ENCODE measurements at regions of chr20 and their contacts with region 1.

Region 1: GRCh38 chr20:43537921-43538877 is 20.6 kb upstream of the SGK2 start:
- DNase-seq: peak in 5 of 9 donors; percentile 19 to 45 (median 31)
- ATAC-seq: peak; percentile 57
- H3K4me3 ChIP-seq: no peak overlapping the region
- H3K4me3 Mint-ChIP-seq: no peak overlapping the region
- H3K27ac ChIP-seq: no peak overlapping the region
- H3K27ac Mint-ChIP-seq: peak overlapping the region in 2 of 9 donors; percentile 45 to 57
- H3K4me1 ChIP-seq: no peaks in the 10 kb centered on the region
- H3K4me1 Mint-ChIP-seq: peaks cover 0 to 4% (median 0%) of the 10 kb centered on the region in 7 donors
- H3K27me3 ChIP-seq: no peaks in the 10 kb centered on the region
- H3K27me3 Mint-ChIP-seq: no peaks in the 10 kb centered on the region

Region 2: GRCh38 chr20:43691928-43692524 is 153.8 kb after region 1 on chr20:
- CTCF ChIA-PET with region 1: interaction called, 13 read pairs
- POLR2A ChIA-PET with region 1: no interaction called
- intact Hi-C with region 1: loop called (anchors 1 kb)
- DNase-seq: peak in 8 of 9 donors; percentile 12 to 62 (median 26)
- ATAC-seq: peak; percentile 73
- H3K4me3 ChIP-seq: no peak overlapping the region
- H3K4me3 Mint-ChIP-seq: no peak overlapping the region
- H3K27ac ChIP-seq: no peak overlapping the region
- H3K27ac Mint-ChIP-seq: peak overlapping the region in 1 of 9 donors; percentile 36
- H3K4me1 ChIP-seq: no peaks in the 10 kb centered on the region
- H3K4me1 Mint-ChIP-seq: peaks cover 0 to 5% (median 5%) of the 10 kb centered on the region in 7 donors
- H3K27me3 ChIP-seq: no peaks in the 10 kb centered on the region
- H3K27me3 Mint-ChIP-seq: no peaks in the 10 kb centered on the region

Region 3: GRCh38 chr20:43840382-43841070 is 302.3 kb after region 1 on chr20:
- CTCF ChIA-PET with region 1: no interaction called
- POLR2A ChIA-PET with region 1: no interaction called
- intact Hi-C with region 1: loop called in 1 of 2 experiments (anchors 1 kb)
- DNase-seq: peak in 6 of 9 donors; percentile 17 to 38 (median 23)
- ATAC-seq: peak; percentile 56
- H3K4me3 ChIP-seq: no peak overlapping the region
- H3K4me3 Mint-ChIP-seq: no peak overlapping the region
- H3K27ac ChIP-seq: no peak overlapping the region
- H3K27ac Mint-ChIP-seq: peak overlapping the region in 2 of 9 donors; percentile 67 to 74
- H3K4me1 ChIP-seq: peaks cover 0 to 11% of the 10 kb centered on the region in 2 donors
- H3K4me1 Mint-ChIP-seq: peaks cover 10 to 55% (median 18%) of the 10 kb centered on the region in 7 donors
- H3K27me3 ChIP-seq: no peaks in the 10 kb centered on the region
- H3K27me3 Mint-ChIP-seq: peaks cover 0 to 13% (median 0%) of the 10 kb centered on the region in 5 donors

Region 4: DNA sequence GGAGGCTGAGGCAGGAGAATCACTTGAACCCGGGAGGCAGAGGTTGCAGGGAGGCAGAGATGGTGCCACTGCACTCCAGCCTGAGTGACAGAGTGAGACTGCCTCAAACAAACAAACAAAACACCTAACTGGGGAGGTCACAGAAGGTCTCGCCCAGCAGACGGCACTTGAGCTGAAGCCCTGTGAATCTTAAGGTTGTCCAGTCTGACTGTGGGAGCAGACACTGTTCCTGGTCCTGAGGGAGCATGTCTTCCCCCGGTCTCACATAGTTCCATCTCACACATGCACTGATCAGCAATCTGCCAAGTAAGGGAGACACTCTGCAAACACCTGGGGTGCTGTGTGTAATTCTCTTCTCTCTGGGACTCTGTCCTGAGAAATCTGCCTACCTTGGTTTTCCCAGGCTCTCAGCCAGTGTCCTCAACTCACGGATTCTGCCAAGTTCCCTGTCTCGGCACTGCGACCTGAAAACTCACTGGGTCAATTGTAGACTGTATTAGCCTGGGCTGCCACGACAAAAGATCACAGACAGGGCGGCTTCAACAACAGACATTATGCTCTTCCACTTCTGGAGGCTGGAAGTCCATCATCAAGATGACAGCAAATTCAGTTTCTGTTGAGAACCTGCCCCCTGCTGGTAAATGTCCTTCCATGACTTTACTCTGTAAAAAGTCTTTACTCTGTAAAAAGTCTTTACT is 554.5 kb after region 1 on chr20:
- CTCF ChIA-PET with region 1: no interaction called
- POLR2A ChIA-PET with region 1: no interaction called
- intact Hi-C with region 1: loop called in 1 of 2 experiments (anchors 1 kb)
- DNase-seq: peak in 4 of 9 donors; percentile 29 to 47 (median 32)
- ATAC-seq: no peak
- H3K4me3 ChIP-seq: no peak overlapping the region
- H3K4me3 Mint-ChIP-seq: no peak overlapping the region
- H3K27ac ChIP-seq: no peak overlapping the region
- H3K27ac Mint-ChIP-seq: peak overlapping the region in 2 of 9 donors; percentile 49 to 52
- H3K4me1 ChIP-seq: no peaks in the 10 kb centered on the region
- H3K4me1 Mint-ChIP-seq: peaks cover 0 to 5% (median 0%) of the 10 kb centered on the region in 7 donors
- H3K27me3 ChIP-seq: no peaks in the 10 kb centered on the region
- H3K27me3 Mint-ChIP-seq: peaks cover 0 to 26% (median 9%) of the 10 kb centered on the region in 5 donors

Region 5: GRCh38 chr20:44187051-44187762 is 649.0 kb after region 1 on chr20 and contains the start of gene JPH2:
- CTCF ChIA-PET with region 1: interaction called, 3 read pairs
- POLR2A ChIA-PET with region 1: no interaction called
- intact Hi-C with region 1: loop called in 1 of 2 experiments (anchors 1 kb)
- DNase-seq: no peak
- ATAC-seq: no peak
- H3K4me3 ChIP-seq: no peak within 1 kb of the TSS
- H3K4me3 Mint-ChIP-seq: peak within 1 kb of the TSS in 9 of 10 donors; percentile 38 to 75 (median 47)
- H3K27ac ChIP-seq: no peak within 1 kb of the TSS
- H3K27ac Mint-ChIP-seq: no peak within 1 kb of the TSS
- H3K4me1 ChIP-seq: peaks cover 0 to 11% of the 10 kb centered on the region in 2 donors
- H3K4me1 Mint-ChIP-seq: peaks cover 4 to 19% (median 12%) of the 10 kb centered on the region in 7 donors
- H3K27me3 ChIP-seq: peaks cover 0 to 12% of the 10 kb centered on the region in 2 donors
- H3K27me3 Mint-ChIP-seq: peaks cover 55 to 71% (median 66%) of the 10 kb centered on the region in 5 donors
- total RNA-seq, gene JPH2: 0.07 to 0.17 TPM in 2 of 5 experiments, not detected in the others